Heart right ventricle (tissue), 16 donors: ENCODE measurements at regions of chr11 and their contacts with region 1.

Region 1: DNA sequence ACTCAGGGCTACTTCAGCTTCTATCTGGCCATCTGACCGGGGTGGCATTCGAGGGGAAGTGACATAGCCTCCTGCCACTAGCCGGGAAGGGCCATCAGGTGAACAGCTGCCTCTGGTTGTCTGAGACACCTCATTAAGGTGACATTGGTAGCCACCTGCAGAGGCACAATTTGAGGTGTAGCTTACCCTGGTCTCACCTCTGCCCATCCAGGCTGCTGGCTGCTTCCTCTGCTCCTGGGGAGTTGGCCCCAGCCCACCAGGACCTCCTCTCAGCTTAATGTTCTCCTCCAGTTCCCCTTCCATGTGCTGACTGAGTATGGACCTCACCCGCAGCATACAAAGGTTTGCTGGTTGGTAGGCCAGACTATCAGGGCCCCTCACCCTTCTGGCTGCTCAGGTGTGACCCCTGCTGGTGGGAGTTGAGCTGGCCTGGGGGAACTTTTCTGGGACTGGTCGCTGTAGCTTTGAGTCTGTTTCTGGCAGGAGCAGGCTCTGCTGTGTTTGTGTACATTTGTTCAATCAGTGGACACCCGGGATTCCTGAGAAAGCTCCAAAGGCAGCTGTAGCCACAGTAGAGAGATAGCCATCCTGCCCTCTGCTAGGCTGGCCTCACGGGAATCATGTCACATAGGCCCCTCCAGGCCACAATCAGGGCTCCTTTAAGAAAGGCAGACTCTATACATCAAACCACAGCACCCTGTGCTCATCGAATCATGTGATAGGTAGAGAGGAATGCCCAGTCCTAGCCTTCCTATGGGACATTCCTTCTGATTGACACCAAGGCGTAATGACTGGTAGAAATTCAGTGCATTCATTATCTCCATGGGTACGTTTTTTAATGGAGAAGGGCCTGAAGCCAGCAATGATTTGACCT is 295.1 kb upstream of the PLET1 start:
- DNase-seq: peak; percentile 47 to 63
- ATAC-seq: peak; percentile 71 to 83 (median 78)
- H3K4me3 ChIP-seq: no peak overlapping the region
- H3K27ac ChIP-seq: no peak overlapping the region
- H3K4me1 ChIP-seq: peaks cover 0 to 6% (median 0%) of the 10 kb centered on the region in 9 donors
- H3K27me3 ChIP-seq: peaks cover 0 to 4% (median 0%) of the 10 kb centered on the region in 7 donors
- CTCF ChIP-seq: peak; percentile 38 to 75 (median 67)

Region 2: DNA sequence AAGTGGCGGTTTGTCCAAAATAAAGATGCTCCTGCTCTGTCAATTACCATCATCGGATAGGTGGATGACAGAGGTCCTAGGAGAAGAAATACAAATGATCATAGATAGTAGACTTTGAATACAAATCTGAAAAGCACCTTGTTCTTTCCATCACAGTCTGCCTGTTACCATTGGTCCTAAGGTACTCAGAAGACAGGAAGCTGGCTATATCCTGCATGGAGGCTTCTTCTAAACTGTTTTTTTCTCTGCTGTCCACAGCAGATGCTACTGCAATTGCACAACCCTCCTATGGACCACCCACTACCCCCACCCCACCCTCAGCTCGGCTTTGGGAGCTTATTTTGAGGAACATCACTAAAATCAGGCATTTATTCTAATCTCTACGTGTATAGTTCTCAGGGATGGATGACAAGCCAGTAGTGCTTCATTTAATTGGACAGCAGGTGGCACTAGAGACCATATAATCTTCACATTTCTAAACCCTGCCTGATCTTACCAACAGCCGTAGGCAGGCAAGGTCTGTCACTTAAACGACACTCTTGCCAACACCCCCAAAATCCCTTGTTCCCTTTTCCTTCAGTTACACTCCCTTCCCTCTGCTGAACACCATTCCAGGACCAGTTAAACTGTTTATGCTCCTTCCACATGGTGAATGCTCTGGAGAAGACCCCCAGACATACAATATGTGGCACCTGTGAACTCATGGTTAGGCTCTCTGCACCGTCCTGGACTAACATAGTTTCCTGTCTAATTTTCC is 336.1 kb before region 1 on chr11:
- intact Hi-C with region 1: loop called in 1 of 10 experiments (anchors 10 kb)
- DNase-seq: peak in 1 of 2 donors; percentile 54
- ATAC-seq: peak; percentile 83 to 95 (median 92)
- H3K4me3 ChIP-seq: no peak overlapping the region
- H3K27ac ChIP-seq: no peak overlapping the region
- H3K4me1 ChIP-seq: peaks cover 0 to 5% (median 0%) of the 10 kb centered on the region in 9 donors
- H3K27me3 ChIP-seq: no peaks in the 10 kb centered on the region
- CTCF ChIP-seq: peak; percentile 60 to 85 (median 81)

Region 3: DNA sequence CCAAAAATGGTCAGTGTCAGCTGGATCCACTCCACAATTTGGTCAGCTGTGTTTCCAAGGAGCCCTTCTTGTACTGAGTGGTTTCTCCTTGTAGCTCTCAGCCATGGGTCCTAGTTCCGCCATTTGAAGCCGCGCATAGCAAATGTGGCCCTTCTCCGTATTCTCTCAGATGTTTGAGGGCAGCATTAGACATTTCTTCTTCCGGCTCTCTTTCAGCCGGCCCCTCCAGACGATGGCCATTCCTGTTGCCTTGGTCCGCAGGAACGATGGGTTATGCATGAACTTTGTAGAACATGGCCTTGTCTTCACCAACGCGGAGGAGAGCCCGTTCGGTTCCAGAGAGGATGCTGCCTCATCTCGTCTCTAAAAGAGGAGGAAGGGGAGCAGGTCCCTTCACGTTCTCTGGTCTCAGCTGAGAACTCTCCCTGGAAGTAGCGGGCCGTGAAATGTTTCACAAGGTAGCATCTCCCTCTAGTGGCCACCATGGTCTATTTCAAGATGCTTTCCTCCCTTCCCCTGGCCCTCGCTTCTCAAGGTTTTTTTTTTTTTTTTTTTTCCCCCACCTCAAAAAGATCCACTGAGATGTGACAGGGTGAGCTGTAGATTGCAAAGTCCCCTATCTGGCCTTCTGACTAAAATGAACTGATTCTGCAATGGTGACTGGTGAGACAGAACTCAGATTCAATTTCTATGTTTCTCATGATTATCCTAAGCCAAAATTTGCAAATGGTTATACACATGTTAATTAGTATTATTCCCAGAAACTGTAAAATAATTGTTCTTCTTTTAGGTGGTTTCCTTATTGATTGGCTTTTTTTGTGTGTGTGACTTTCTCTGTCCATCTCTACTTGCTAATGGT is 275.2 kb before region 1 on chr11:
- intact Hi-C with region 1: loop called in 3 of 10 experiments (anchors 5 to 10 kb)
- DNase-seq: peak in 1 of 2 donors; percentile 70
- ATAC-seq: peak; percentile 81 to 96 (median 90)
- H3K4me3 ChIP-seq: peak overlapping the region; percentile 8 to 67 (median 54)
- H3K27ac ChIP-seq: peak overlapping the region in 6 of 10 donors; percentile 5 to 64 (median 38)
- H3K4me1 ChIP-seq: peaks cover 0 to 8% (median 5%) of the 10 kb centered on the region in 9 donors
- H3K27me3 ChIP-seq: no peaks in the 10 kb centered on the region
- CTCF ChIP-seq: peak; percentile 48 to 72 (median 66)

Region 4: GRCh38 chr11:112289588-112290492 is 265.9 kb before region 1 on chr11:
- intact Hi-C with region 1: loop called in 9 of 10 experiments (anchors 1 to 10 kb)
- DNase-seq: peak; percentile 78 to 88
- ATAC-seq: peak; percentile 84 to 96 (median 91)
- H3K4me3 ChIP-seq: peak overlapping the region; percentile 36 to 73 (median 62)
- H3K27ac ChIP-seq: peak overlapping the region in 9 of 10 donors; percentile 42 to 88 (median 78)
- H3K4me1 ChIP-seq: peaks cover 0 to 44% (median 19%) of the 10 kb centered on the region in 9 donors
- H3K27me3 ChIP-seq: no peaks in the 10 kb centered on the region
- CTCF ChIP-seq: peak; percentile 66 to 95 (median 90)

Region 5: DNA sequence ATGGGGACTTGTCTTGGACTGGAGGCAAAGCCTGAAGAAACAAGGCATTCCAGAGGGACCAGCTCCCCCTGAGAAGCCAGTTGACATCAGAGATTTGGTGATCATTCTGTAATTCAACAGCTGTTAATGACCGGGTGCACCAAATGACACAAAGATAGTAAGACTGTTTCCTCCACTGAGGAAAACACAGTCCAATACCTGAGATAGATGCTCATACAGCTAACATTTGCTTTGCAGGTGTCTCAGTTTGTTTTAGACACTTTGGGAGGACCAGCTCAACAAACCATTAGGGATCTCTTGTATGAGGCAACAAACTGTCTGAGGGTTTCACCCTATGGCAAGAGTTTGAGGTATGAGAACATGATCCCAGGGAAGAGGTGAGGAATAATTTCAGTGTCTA is 57.9 kb before region 1 on chr11:
- intact Hi-C with region 1: no loop called
- DNase-seq: no peak
- ATAC-seq: no peak
- H3K4me3 ChIP-seq: no peak overlapping the region
- H3K27ac ChIP-seq: no peak overlapping the region
- H3K4me1 ChIP-seq: no peaks in the 10 kb centered on the region
- H3K27me3 ChIP-seq: peaks cover 0 to 4% (median 0%) of the 10 kb centered on the region in 7 donors
- CTCF ChIP-seq: no peak

Region 6: GRCh38 chr11:112627588-112628045 is 71.9 kb after region 1 on chr11:
- intact Hi-C with region 1: loop called in 1 of 10 experiments (anchors 2 kb)
- DNase-seq: no peak
- ATAC-seq: no peak
- H3K4me3 ChIP-seq: no peak overlapping the region
- H3K27ac ChIP-seq: no peak overlapping the region
- H3K4me1 ChIP-seq: peaks cover 0 to 6% (median 0%) of the 10 kb centered on the region in 9 donors
- H3K27me3 ChIP-seq: no peaks in the 10 kb centered on the region
- CTCF ChIP-seq: no peak